Activated B cell treated with CpG ODN at 0.5 μM for 24 hours (primary cell): ENCODE measurements at regions of chr5 and their contacts with region 1.

Region 1: GRCh38 chr5:5492087-5492933 is 69.8 kb downstream of the ICE1 start:
- DNase-seq: no peak
- ATAC-seq: no peak
- H3K4me3 Mint-ChIP-seq: peak overlapping the region; percentile 66
- H3K27ac Mint-ChIP-seq: no peak overlapping the region
- H3K4me1 Mint-ChIP-seq: peaks cover 23% of the 10 kb centered on the region
- H3K27me3 Mint-ChIP-seq: no peaks in the 10 kb centered on the region
- CTCF ChIP-seq: no peak

Region 2: DNA sequence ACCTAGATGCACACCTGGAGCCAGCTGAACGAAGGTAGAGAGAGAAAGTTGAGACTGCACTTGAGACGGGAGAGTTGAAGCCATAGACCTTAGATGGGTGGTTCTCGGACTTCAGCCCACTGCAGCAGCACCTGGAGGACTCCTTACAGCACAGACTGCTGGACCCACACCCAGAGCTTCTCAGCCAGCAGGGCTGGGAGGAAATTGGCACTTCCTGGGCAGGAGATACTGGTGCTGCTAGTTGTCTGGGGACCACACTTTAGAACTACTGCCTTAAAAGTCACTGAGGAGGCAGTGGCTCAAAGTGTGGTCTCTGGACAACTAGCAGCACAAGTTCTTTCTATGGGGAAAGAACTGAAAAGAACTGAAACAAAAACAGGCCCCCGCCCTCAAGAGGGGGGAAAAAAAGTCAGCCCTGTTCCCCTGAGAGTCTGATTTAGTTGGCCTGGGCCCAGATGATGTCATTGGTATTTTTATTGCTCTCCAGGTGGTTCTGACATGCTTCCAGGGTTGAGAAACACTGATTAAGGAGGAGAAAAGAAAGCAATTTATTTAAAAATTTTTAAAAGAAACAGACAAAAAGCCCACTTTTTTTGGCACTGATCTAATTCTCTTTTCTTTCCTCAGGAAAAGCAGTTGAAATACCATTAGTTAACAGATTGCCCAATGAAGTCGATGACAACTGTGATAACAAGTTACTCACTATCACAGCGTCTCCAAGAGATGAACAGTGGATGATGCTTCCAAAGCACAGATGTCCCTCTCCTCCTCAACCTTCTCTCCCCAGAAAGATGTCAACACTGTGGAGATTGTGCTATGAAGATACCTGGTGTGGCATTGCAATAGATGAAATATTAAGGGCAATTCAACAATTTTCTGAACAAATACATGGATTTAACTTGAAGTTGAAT is 425.8 kb before region 1 on chr5:
- CTCF ChIA-PET with region 1: no interaction called
- POLR2A ChIA-PET with region 1: no interaction called
- intact Hi-C with region 1: no loop called
- DNase-seq: no peak
- ATAC-seq: no peak
- H3K4me3 Mint-ChIP-seq: no peak overlapping the region
- H3K27ac Mint-ChIP-seq: no peak overlapping the region
- H3K4me1 Mint-ChIP-seq: no peaks in the 10 kb centered on the region
- H3K27me3 Mint-ChIP-seq: no peaks in the 10 kb centered on the region
- CTCF ChIP-seq: no peak

Region 3: GRCh38 chr5:5398046-5398445 is 94.3 kb before region 1 on chr5:
- CTCF ChIA-PET with region 1: no interaction called
- POLR2A ChIA-PET with region 1: no interaction called
- intact Hi-C with region 1: no loop called
- DNase-seq: no peak
- ATAC-seq: no peak
- H3K4me3 Mint-ChIP-seq: no peak overlapping the region
- H3K27ac Mint-ChIP-seq: no peak overlapping the region
- H3K4me1 Mint-ChIP-seq: no peaks in the 10 kb centered on the region
- H3K27me3 Mint-ChIP-seq: no peaks in the 10 kb centered on the region
- CTCF ChIP-seq: no peak

Region 4: DNA sequence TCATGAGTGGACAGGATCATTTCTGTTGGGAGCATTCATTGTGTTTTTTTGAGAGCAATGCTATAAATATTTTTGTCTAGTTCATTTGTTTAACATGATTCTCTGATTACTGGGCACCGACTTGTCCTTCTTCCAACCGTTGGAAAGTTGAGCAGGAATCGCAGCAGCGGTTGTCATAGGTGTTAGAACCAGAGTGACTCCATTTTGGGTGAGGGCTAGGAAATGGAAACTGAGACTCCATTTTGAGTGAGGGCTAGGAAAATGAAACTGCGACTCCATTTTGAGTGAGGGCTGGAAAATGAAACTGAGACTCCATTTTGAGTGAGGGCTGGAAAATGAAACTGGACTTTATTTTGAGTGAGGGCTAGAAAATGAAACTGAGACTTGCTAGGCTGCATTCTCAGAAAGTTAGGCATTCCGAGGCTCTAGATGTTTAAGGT is 30.8 kb after region 1 on chr5:
- CTCF ChIA-PET with region 1: no interaction called
- POLR2A ChIA-PET with region 1: no interaction called
- intact Hi-C with region 1: loop called (anchors 1 kb)
- DNase-seq: no peak
- ATAC-seq: peak; percentile 60
- H3K4me3 Mint-ChIP-seq: peak overlapping the region; percentile 32
- H3K27ac Mint-ChIP-seq: peak overlapping the region; percentile 10
- H3K4me1 Mint-ChIP-seq: peaks cover 12% of the 10 kb centered on the region
- H3K27me3 Mint-ChIP-seq: no peaks in the 10 kb centered on the region
- CTCF ChIP-seq: no peak

Region 5: DNA sequence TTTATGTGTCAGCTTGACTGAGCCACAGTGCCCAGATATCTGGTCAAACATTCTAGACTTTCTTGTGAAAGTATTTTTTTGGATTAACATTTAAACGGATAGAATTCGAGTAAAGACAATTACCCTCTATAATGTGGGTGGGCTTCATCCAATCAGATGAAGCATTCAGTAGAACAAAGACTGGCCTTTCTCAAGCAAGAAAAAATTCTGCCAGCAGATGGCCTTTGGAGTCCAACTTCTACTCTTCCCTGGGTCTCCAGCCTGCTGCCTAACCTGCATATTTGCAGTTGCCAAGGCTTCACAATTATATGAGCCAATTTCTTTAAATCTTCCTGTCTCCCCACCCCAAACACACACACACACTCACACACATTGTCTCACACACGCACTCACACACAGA is 799.7 kb after region 1 on chr5:
- CTCF ChIA-PET with region 1: no interaction called
- POLR2A ChIA-PET with region 1: no interaction called
- intact Hi-C with region 1: loop called (anchors 10 kb)
- DNase-seq: no peak
- ATAC-seq: no peak
- H3K4me3 Mint-ChIP-seq: no peak overlapping the region
- H3K27ac Mint-ChIP-seq: no peak overlapping the region
- H3K4me1 Mint-ChIP-seq: no peaks in the 10 kb centered on the region
- H3K27me3 Mint-ChIP-seq: no peaks in the 10 kb centered on the region
- CTCF ChIP-seq: peak; percentile 23

Region 6: DNA sequence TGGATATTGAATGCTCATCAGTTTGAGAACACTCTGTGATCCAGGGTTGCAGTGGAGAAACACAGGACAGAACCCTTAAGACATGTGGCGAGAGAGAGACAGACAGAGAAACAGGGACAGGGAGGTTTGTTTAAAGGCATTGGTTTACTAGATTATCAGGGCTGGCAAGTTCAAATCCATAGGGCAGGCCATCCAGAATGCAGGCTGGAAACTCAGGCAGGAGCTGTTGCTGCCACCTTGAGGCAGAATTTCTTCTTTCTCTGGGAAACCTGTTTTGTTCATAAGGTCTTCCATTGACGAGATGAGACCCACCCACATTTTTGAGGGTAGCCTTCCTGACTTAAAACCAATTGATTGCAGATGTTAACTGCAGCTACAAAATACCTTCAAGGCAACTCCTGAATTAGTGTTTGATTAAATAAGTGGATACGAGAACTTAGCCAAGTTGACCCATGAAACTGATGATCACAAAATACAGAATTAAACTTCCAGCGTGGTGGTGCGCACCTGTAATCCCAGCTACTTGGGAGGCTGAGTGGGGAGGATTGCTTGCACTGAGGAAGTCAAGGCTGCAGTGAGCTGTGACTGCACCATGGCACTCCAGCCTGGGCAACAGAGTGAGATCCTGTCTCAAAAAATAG is 1084.7 kb after region 1 on chr5:
- CTCF ChIA-PET with region 1: interaction called, 5 read pairs
- POLR2A ChIA-PET with region 1: no interaction called
- intact Hi-C with region 1: loop called (anchors 1 kb)
- DNase-seq: no peak
- ATAC-seq: peak; percentile 21
- H3K4me3 Mint-ChIP-seq: no peak overlapping the region
- H3K27ac Mint-ChIP-seq: no peak overlapping the region
- H3K4me1 Mint-ChIP-seq: no peaks in the 10 kb centered on the region
- H3K27me3 Mint-ChIP-seq: peaks cover 14% of the 10 kb centered on the region
- CTCF ChIP-seq: no peak

Region 7: GRCh38 chr5:6712577-6713275 is 1220.4 kb after region 1 on chr5:
- CTCF ChIA-PET with region 1: no interaction called
- POLR2A ChIA-PET with region 1: no interaction called
- intact Hi-C with region 1: loop called (anchors 1 kb)
- DNase-seq: peak; percentile 98
- ATAC-seq: peak; percentile 79
- H3K4me3 Mint-ChIP-seq: peak overlapping the region; percentile 89
- H3K27ac Mint-ChIP-seq: peak overlapping the region; percentile 92
- H3K4me1 Mint-ChIP-seq: peaks cover 38% of the 10 kb centered on the region
- H3K27me3 Mint-ChIP-seq: no peaks in the 10 kb centered on the region
- CTCF ChIP-seq: no peak